ENCODE measurements at regions of chr2 and their contacts with region 1.

Region 1: DNA sequence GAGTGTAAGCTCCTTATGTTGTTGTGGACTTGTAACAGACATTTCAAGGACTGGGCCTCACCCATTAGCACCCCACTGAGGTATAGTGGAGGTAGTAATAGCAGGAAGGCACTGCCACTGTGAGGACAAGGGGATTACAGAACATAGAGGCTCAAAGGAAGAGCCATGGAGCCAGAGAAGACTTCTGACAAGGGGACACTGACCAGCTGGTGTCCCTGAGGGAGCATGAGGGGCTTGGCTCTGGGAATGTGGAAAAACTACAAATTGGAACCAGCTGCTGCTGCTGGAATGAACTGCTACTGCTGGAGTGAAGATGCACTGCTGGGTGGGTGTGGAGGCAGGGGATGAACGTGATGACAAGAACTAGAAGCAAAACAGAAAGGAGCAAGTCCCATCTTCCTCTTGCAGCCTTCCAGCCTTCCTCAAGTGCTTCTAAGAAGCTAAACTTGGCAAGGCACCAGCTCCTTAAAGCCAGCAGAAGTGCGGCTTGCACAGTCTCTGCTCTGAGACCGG is 167.3 kb upstream of the NOSTRIN start:
- DNase-seq: peak; percentile 60 to 84 (median 72)
- ATAC-seq: peak; percentile 22 to 65 (median 38)
- H3K4me3 ChIP-seq: no peak overlapping the region
- H3K27ac ChIP-seq: peak overlapping the region in 9 of 12 donors; percentile 16 to 92 (median 82)
- H3K4me1 ChIP-seq: peaks cover 0 to 71% (median 45%) of the 10 kb centered on the region in 12 donors
- H3K27me3 ChIP-seq: no peaks in the 10 kb centered on the region
- CTCF ChIP-seq: no peak
- POLR2A ChIP-seq: no peak

Region 2: GRCh38 chr2:168518555-168519066 is 116.5 kb before region 1 on chr2:
- intact Hi-C with region 1: loop called in 3 of 10 experiments (anchors 5 to 10 kb)
- DNase-seq: peak in 3 of 5 donors; percentile 29 to 51 (median 39)
- ATAC-seq: peak; percentile 80 to 94 (median 90)
- H3K4me3 ChIP-seq: peak overlapping the region in 1 of 12 donors; percentile 9
- H3K27ac ChIP-seq: peak overlapping the region in 11 of 12 donors; percentile 21 to 78 (median 52)
- H3K4me1 ChIP-seq: peaks cover 0 to 66% (median 37%) of the 10 kb centered on the region in 12 donors
- H3K27me3 ChIP-seq: no peaks in the 10 kb centered on the region
- CTCF ChIP-seq: no peak
- POLR2A ChIP-seq: no peak

Region 3: GRCh38 chr2:168530982-168531622 is 104.0 kb before region 1 on chr2:
- intact Hi-C with region 1: loop called in 5 of 10 experiments (anchors 2 to 10 kb)
- DNase-seq: no peak
- ATAC-seq: peak in 1 of 4 donors; percentile 32
- H3K4me3 ChIP-seq: no peak overlapping the region
- H3K27ac ChIP-seq: peak overlapping the region in 11 of 12 donors; percentile 56 to 84 (median 77)
- H3K4me1 ChIP-seq: peaks cover 7 to 84% (median 37%) of the 10 kb centered on the region in 12 donors
- H3K27me3 ChIP-seq: no peaks in the 10 kb centered on the region
- CTCF ChIP-seq: no peak
- POLR2A ChIP-seq: no peak

Region 4: GRCh38 chr2:168819050-168819715 is 184.1 kb after region 1 on chr2:
- intact Hi-C with region 1: no loop called
- DNase-seq: no peak
- ATAC-seq: no peak
- H3K4me3 ChIP-seq: peak overlapping the region in 4 of 12 donors; percentile 10 to 44 (median 22)
- H3K27ac ChIP-seq: no peak overlapping the region
- H3K4me1 ChIP-seq: peaks cover 0 to 31% (median 14%) of the 10 kb centered on the region in 12 donors
- H3K27me3 ChIP-seq: no peaks in the 10 kb centered on the region
- CTCF ChIP-seq: no peak
- POLR2A ChIP-seq: no peak

Measured in heart left ventricle (tissue), 16 donors.